Right ventricle myocardium superior (tissue), 1 donor: ENCODE measurements at regions of chr19 and their contacts with region 1.

Region 1: GRCh38 chr19:12974301-12975220 is 5.2 kb downstream of the DAND5 start:
- DNase-seq: no peak
- ATAC-seq: no peak

Region 2: GRCh38 chr19:12913011-12913561 is 61.5 kb before region 1 on chr19:
- intact Hi-C with region 1: no loop called
- DNase-seq: peak; percentile 87
- ATAC-seq: peak; percentile 88

Region 3: DNA sequence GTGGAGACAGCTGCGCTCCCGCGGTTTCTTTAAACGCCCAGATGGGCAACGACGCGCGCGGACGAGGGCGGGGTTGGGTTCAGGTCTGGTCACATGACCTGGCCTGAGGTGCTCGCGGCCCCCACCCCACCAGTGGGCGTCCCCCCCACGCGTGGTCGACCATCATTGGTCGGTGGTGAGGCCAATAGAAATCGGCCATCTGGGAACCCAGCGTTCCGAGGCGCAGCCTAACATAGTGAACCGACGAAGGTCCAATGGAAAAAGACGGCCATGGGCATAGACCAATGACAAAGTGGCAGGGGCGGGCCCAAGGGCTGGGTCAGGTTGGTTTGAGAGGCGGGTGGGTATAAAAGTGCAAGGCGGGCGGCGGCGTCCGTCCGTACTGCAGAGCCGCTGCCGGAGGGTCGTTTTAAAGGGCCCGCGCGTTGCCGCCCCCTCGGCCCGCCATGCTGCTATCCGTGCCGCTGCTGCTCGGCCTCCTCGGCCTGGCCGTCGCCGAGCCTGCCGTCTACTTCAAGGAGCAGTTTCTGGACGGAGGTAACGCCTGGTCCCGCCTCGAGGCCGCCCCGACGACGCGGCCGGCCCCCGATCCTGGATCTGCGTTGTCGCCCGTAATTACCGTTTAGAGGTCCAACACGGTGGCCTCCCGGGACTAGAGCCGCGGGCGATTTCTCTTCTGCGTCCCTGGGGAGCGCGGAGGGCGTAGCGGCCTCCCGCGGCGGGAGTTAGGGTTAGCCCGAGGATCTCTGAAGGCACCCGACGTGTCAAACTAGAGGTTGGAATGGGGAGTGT is 36.1 kb before region 1 on chr19 and contains the start of gene CALR:
- intact Hi-C with region 1: no loop called
- DNase-seq: peak; percentile 100
- ATAC-seq: peak; percentile 91
- total RNA-seq, gene CALR: 378 TPM

Region 4: DNA sequence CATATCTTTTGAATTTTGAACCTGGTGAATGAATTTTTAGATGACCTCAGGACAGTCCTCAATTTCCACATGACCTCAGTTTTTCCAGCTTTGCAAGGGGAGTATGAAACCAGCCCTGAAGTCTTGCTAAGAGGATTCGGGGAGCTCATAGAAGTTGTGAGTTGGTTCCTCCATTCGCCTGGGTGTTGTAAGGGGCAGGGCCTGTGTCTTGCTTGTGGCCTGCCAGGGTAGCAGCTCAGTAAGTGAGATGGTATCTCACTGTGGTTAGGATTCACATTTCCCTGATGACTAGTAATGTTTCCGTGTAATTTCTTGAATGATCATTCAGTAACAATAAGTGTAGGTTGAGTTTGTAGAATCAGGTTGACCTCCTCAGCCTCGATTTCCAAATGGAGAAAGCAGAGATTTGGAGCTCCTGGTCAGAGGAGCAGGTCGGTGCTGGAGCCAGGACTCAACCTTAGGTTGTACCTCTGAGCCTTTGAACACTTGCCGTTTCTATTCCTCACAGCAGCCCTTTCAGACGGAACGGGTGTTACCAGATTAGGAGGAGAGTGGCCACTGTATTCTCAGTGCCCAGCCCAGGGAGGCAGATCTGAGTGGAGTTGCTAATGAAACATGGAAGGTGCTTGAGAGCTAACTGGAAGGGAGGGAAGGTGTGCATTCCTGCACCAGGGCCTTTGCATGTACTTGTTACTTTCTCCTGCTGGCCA is 158.1 kb after region 1 on chr19:
- intact Hi-C with region 1: no loop called
- DNase-seq: no peak
- ATAC-seq: no peak

Region 5: GRCh38 chr19:13262450-13262849 is 287.9 kb after region 1 on chr19:
- intact Hi-C with region 1: loop called (anchors 5 kb)
- DNase-seq: no peak
- ATAC-seq: peak; percentile 55